HepG2 (cell line): ENCODE measurements at regions of chr20 and their contacts with region 1.

Region 1: GRCh38 chr20:12575352-12576095 is 433.2 kb upstream of the SPTLC3 start:
- DNase-seq: no peak
- ATAC-seq: no peak
- H3K4me3 ChIP-seq: no peak overlapping the region
- H3K27ac ChIP-seq: no peak overlapping the region
- H3K4me1 ChIP-seq: no peaks in the 10 kb centered on the region
- H3K27me3 ChIP-seq: no peaks in the 10 kb centered on the region
- CTCF ChIP-seq: no peak
- EP300 ChIP-seq: no peak
- POLR2A ChIP-seq: no peak
- RAD21 ChIP-seq: no peak

Region 2: GRCh38 chr20:13183005-13183404 is 607.5 kb after region 1 on chr20:
- CTCF ChIA-PET with region 1: no interaction called
- POLR2A ChIA-PET with region 1: no interaction called
- in situ Hi-C with region 1: loop called (anchors 25 kb)
- intact Hi-C with region 1: no loop called
- DNase-seq: no peak
- ATAC-seq: no peak
- H3K4me3 ChIP-seq: no peak overlapping the region
- H3K27ac ChIP-seq: no peak overlapping the region
- H3K4me1 ChIP-seq: no peaks in the 10 kb centered on the region
- H3K27me3 ChIP-seq: no peaks in the 10 kb centered on the region
- CTCF ChIP-seq: no peak
- EP300 ChIP-seq: no peak
- POLR2A ChIP-seq: no peak
- RAD21 ChIP-seq: no peak